OCI-LY7 (cell line): ENCODE measurements at regions of chr6 and their contacts with region 1.

Region 1: GRCh38 chr6:7406743-7407142 is 17.1 kb downstream of the RIOK1 start:
- DNase-seq: no peak
- H3K4me3 ChIP-seq: no peak overlapping the region
- H3K27ac ChIP-seq: no peak overlapping the region
- H3K4me1 ChIP-seq: no peaks in the 10 kb centered on the region
- CTCF ChIP-seq: no peak

Region 2: DNA sequence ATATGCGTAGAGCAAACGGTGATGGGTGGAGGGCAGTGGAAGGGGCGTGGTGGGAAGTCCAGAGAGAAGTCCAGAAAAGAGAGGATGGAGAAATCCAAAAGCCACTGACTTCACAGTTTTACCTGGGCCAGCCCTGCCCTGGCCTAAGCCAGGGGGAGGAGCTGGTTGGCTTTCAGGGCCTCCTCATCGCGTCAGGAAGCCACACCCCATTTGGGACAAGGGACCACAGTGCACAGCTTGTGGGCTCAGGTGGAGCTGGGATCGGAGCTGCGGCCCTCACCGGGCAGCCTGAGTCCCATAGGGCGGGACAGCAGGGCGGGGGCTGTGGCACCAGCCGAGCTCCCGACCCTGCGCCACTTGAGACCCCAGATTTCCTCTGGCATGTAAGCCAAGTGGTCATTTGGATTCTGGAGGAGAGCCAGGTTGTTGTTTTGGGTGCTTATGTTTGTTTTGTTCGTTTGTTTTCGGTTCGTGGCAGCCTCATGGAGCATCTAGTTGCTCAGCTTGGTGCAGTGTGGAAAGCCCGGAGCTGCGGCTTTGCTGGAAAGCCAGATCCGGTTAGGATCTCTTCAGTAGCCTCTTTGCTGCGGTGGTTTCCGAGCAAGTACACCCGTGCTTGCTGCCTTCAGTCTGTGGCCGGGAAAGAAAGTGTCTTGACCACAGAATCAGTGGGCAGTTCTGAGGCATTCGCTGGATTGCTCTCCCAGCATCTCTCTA is 25.1 kb after region 1 on chr6:
- CTCF ChIA-PET with region 1: no interaction called
- POLR2A ChIA-PET with region 1: no interaction called
- intact Hi-C with region 1: no loop called
- DNase-seq: no peak
- H3K4me3 ChIP-seq: no peak overlapping the region
- H3K27ac ChIP-seq: no peak overlapping the region
- H3K4me1 ChIP-seq: no peaks in the 10 kb centered on the region
- CTCF ChIP-seq: no peak

Region 3: GRCh38 chr6:7468382-7469081 is 61.8 kb after region 1 on chr6:
- CTCF ChIA-PET with region 1: no interaction called
- POLR2A ChIA-PET with region 1: no interaction called
- intact Hi-C with region 1: no loop called
- DNase-seq: no peak
- H3K4me3 ChIP-seq: no peak overlapping the region
- H3K27ac ChIP-seq: no peak overlapping the region
- H3K4me1 ChIP-seq: no peaks in the 10 kb centered on the region
- CTCF ChIP-seq: no peak

Region 4: GRCh38 chr6:7604506-7604905 is 197.8 kb after region 1 on chr6:
- CTCF ChIA-PET with region 1: no interaction called
- POLR2A ChIA-PET with region 1: no interaction called
- intact Hi-C with region 1: loop called (anchors 5 kb)
- DNase-seq: no peak
- H3K4me3 ChIP-seq: no peak overlapping the region
- H3K27ac ChIP-seq: no peak overlapping the region
- H3K4me1 ChIP-seq: no peaks in the 10 kb centered on the region
- CTCF ChIP-seq: no peak